ENCODE measurements at regions of chr19 and their contacts with region 1.

Region 1: GRCh38 chr19:10543420-10544241 is at the start of gene ATG4D:
- DNase-seq: peak; percentile 81
- ATAC-seq: peak; percentile 78
- H3K4me3 ChIP-seq: peak within 1 kb of the TSS; percentile 95
- H3K27ac ChIP-seq: no peak within 1 kb of the TSS
- H3K4me1 ChIP-seq: 0 out of 2 replicates have a peak, but pooled peaks cover 9% of the 10 kb centered on the region
- H3K27me3 ChIP-seq: no peaks in the 10 kb centered on the region
- CTCF ChIP-seq: no peak
- total RNA-seq, gene ATG4D: 53.2 and 65.9 TPM in 2 replicates

Region 2: DNA sequence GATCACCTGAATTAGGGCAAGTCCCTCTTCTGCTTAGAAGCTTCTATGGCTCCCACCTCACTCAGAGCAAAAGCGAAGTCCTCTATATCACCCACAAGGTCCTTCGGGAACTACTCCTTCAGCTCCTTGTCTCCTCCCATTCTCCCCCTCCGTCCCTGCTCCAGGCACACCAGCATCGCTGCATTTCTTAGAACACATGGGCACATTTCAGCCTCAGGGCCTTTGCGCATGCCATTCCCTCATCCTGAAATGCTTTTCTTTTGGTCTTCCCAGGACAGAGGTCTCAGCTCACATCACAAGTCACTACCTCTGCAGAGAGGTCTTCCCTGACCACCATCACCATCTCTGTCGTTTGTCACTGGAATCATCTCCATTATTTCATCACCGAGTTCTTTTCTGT is 30.4 kb before region 1 on chr19:
- CTCF ChIA-PET with region 1: no interaction called
- POLR2A ChIA-PET with region 1: no interaction called
- intact Hi-C with region 1: no loop called
- DNase-seq: no peak
- ATAC-seq: no peak
- H3K4me3 ChIP-seq: no peak overlapping the region
- H3K27ac ChIP-seq: no peak overlapping the region
- H3K4me1 ChIP-seq: peaks cover 15% of the 10 kb centered on the region; the same call in 1 of the 2 replicates
- H3K27me3 ChIP-seq: no peaks in the 10 kb centered on the region
- CTCF ChIP-seq: no peak

Region 3: DNA sequence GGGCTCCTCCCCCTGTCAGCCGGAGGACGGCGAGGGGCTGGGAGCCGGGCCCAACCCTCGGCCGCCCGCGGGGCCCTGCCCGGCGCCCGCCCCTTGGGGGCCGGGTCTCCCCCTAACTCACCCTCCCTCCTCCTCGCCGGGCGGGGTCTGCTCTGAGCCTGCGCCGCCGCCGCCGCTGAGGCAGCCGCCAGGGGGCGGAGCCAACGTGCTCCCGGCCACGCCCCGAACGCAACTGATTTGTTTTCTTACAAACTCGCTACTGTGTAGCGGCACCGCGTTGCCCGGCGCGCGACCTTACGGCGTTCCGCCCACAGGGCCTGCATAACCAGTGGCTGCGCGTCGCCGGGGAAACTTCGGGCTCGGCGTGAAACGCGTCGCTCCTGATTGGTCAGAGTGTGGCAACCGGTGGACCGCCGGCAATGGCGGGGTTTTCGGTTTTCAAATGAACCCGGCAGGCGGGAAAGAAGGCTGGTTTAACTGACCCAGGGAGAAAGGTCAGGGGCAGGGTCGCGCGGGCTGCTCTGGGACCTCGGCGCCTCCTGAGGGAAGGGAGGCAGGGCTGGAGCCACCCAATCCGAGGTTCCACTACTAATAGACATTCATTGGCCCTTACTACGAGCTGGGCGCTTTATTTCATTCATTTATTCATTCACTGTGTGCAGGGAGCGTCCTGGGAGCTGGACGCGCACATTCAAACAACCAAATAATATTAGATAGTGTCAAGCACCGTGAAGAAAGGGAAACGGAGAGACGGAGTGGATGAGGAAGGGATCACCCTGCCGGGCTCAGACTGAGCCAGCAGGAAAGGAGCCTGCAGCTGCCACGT is 25.4 kb after region 1 on chr19 and contains the start of gene CDKN2D:
- CTCF ChIA-PET with region 1: interaction called, 3 read pairs
- POLR2A ChIA-PET with region 1: interaction called, 3 read pairs
- intact Hi-C with region 1: loop called (anchors 1 kb)
- DNase-seq: peak; percentile 100
- ATAC-seq: peak; percentile 87
- H3K4me3 ChIP-seq: peak within 1 kb of the TSS; percentile 72
- H3K27ac ChIP-seq: peak within 1 kb of the TSS; percentile 84
- H3K4me1 ChIP-seq: peaks cover 32% of the 10 kb centered on the region
- H3K27me3 ChIP-seq: no peaks in the 10 kb centered on the region
- CTCF ChIP-seq: no peak
- total RNA-seq, gene CDKN2D: 17.1 and 22.5 TPM in 2 replicates

Measured in PC-3 (cell line).